Activated T-helper 1 cell treated with anti-CD3 and anti-CD28 coated beads, Interleukin-12 subunit alpha, Interleukin-12 subunit beta, Interleukin-2, Interleukin-4 antibody, amounts not matched to agents 30 ng/mL and 10 ng/mL and 1 ng/mL, durations not matched to agents 14 hours and 24 hours and 36 hours (primary cell): ENCODE measurements at regions of chr13 and their contacts with region 1.

Region 1: GRCh38 chr13:49996951-49997895 is at the start of gene TRIM13:
- DNase-seq: peak; percentile 76
- H3K4me3 Mint-ChIP-seq: peak within 1 kb of the TSS; percentile 87
- H3K27ac Mint-ChIP-seq: peak within 1 kb of the TSS; percentile 82
- H3K4me1 Mint-ChIP-seq: peaks cover 54% of the 10 kb centered on the region
- H3K27me3 Mint-ChIP-seq: no peaks in the 10 kb centered on the region
- total RNA-seq, gene TRIM13: 14.7 and 16.5 TPM in 2 replicates

Region 2: GRCh38 chr13:49877629-49878218 is 119.5 kb before region 1 on chr13:
- intact Hi-C with region 1: no loop called
- DNase-seq: no peak
- H3K4me3 Mint-ChIP-seq: no peak overlapping the region
- H3K27ac Mint-ChIP-seq: no peak overlapping the region
- H3K4me1 Mint-ChIP-seq: no peaks in the 10 kb centered on the region
- H3K27me3 Mint-ChIP-seq: peaks cover 2% of the 10 kb centered on the region

Region 3: GRCh38 chr13:49936085-49936940 is 60.9 kb before region 1 on chr13 and contains the start of gene SPRYD7:
- intact Hi-C with region 1: loop called (anchors 1 kb)
- DNase-seq: peak; percentile 92
- H3K4me3 Mint-ChIP-seq: peak within 1 kb of the TSS; percentile 94
- H3K27ac Mint-ChIP-seq: peak within 1 kb of the TSS; percentile 87
- H3K4me1 Mint-ChIP-seq: peaks cover 11% of the 10 kb centered on the region
- H3K27me3 Mint-ChIP-seq: peaks cover 22% of the 10 kb centered on the region
- total RNA-seq, gene SPRYD7: 6.9 and 7.0 TPM in 2 replicates

Region 4: GRCh38 chr13:50037788-50038187 is 40.6 kb after region 1 on chr13:
- intact Hi-C with region 1: loop called (anchors 5 kb)
- DNase-seq: no peak
- H3K4me3 Mint-ChIP-seq: no peak overlapping the region
- H3K27ac Mint-ChIP-seq: no peak overlapping the region
- H3K4me1 Mint-ChIP-seq: no peaks in the 10 kb centered on the region
- H3K27me3 Mint-ChIP-seq: no peaks in the 10 kb centered on the region

Region 5: DNA sequence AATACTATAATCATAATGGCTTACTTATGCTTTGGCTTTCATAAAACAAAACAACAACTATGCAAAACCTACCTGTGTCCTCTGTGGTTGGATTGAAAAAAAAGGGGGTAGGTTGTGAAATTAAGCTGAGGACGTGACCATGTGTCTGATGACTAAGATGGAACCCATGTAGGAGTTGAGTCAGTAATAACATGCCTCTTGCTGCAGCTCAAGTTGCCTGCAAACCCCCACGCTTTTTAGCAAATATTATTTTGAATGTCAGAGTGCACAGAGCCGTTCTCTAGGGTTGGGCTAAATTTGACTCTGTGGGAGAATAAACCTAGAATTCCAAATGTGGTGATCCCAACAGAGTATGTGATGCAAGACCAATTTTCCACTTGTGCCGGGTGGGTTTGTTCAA is 227.3 kb after region 1 on chr13:
- intact Hi-C with region 1: loop called (anchors 2 kb)
- DNase-seq: no peak
- H3K4me3 Mint-ChIP-seq: peak overlapping the region; percentile 12
- H3K27ac Mint-ChIP-seq: peak overlapping the region; percentile 24
- H3K4me1 Mint-ChIP-seq: peaks cover 75% of the 10 kb centered on the region
- H3K27me3 Mint-ChIP-seq: peaks cover 38% of the 10 kb centered on the region

Region 6: DNA sequence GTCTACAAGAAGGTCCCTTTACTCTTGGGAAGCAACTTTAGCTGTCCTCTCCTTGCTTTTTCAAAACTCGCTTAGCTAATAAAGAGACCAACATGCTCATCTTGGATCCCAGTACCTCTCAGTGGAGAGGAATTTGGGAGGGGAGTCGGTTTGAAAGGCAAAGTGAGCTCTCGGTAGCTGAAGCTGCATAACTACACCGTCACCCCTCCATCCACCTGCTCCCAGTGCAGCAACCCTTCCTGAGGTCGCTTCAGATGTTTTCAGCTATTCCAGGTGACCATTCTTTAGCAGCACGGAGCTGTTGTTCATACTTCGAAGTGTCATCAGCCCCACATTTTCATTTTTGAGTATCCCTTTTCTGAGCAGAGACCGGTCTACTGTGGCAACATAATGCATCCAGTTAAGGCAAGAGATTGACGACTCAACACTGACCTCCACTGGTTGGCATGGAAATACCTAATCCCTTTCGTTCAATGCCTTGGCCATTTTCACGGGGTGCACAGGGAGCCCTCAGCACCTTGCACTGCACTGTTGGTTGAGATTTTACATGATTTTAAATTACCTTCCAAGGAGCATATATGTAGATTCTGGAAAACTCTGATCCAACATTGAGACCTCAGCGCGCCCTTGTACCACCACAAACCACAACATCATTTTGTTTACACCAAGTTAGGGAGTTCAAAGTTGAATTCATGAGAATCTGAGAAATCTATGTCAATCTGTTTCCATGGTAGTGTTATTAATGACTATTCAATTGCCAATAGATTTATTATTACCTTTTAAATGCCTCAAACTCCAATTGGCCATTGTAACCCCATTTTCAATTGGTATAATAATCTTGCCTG is 804.1 kb after region 1 on chr13:
- intact Hi-C with region 1: loop called (anchors 5 kb)
- DNase-seq: peak; percentile 50
- H3K4me3 Mint-ChIP-seq: no peak overlapping the region
- H3K27ac Mint-ChIP-seq: no peak overlapping the region
- H3K4me1 Mint-ChIP-seq: peaks cover 25% of the 10 kb centered on the region
- H3K27me3 Mint-ChIP-seq: no peaks in the 10 kb centered on the region